Testis (tissue), 5 donors: ENCODE measurements at regions of chr6 and their contacts with region 1.

Region 1: DNA sequence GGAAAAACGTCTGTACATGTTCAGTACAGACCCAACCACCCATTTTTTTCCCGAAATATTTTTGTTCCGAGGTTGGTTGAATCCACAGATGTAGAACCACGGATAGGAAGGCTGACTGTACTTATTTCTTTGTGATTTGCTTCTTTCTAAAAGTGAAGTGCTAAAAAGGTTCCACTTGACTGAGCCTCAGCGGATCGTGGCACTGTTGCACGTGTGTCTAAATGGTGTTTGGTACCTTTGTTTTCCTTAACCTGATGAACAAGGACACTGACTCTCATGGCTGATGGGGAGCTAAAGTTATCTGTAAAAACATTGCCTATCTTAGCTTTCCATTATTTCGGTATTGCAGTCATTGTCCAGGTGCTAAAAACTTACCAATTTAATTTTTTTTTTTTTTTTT is 6.2 kb downstream of the BPHL start:
- DNase-seq: no peak
- H3K4me3 ChIP-seq: no peak overlapping the region
- H3K27ac ChIP-seq: no peak overlapping the region
- H3K4me1 ChIP-seq: no peaks in the 10 kb centered on the region
- H3K27me3 ChIP-seq: no peaks in the 10 kb centered on the region
- CTCF ChIP-seq: no peak
- POLR2A ChIP-seq: no peak

Region 2: DNA sequence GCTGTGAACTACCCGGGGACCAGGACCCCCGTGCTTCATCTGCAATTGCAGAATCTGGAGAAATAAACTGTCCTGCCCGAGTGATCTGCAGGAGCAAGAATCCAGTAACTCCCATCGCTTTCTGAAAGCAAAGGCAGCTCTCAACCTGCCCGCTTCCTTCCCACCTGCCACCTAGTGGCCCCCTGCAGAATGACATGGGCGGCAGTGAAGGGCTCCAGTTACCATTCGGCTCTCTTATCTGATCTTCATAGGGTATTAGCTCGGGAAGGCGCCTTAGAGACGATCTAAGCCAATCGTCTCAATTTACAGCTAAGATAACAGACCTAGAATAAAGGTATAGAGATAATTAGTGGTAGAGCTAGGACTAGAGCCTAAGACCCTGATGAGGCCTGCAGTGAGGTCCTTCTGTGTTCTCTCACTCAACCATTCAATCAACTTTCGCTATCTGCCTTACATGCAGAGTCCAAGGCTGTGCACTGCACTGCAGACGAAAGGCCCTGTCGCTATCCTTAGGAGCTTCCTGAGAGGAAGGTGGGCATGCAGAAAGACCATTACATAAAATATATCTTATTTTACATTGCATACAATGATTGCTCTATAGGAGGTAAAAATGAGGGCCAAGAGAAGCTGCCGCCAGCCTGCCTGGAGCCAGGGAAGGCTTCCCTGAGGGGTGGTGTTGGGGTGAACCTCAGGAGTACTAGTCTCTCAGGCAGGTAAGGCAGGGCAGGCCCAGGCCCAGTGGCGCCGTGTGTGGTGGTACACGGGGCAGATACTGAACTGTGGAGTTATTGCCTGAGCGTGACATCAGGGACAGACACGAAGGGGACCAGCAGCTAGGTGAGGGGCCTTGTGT is 127.0 kb after region 1 on chr6:
- intact Hi-C with region 1: loop called (anchors 5 kb)
- DNase-seq: peak; percentile 78
- H3K4me3 ChIP-seq: no peak overlapping the region
- H3K27ac ChIP-seq: no peak overlapping the region
- H3K4me1 ChIP-seq: peaks cover 5% of the 10 kb centered on the region
- H3K27me3 ChIP-seq: no peaks in the 10 kb centered on the region
- CTCF ChIP-seq: peak; percentile 88 to 96 (median 91)
- POLR2A ChIP-seq: no peak

Region 3: DNA sequence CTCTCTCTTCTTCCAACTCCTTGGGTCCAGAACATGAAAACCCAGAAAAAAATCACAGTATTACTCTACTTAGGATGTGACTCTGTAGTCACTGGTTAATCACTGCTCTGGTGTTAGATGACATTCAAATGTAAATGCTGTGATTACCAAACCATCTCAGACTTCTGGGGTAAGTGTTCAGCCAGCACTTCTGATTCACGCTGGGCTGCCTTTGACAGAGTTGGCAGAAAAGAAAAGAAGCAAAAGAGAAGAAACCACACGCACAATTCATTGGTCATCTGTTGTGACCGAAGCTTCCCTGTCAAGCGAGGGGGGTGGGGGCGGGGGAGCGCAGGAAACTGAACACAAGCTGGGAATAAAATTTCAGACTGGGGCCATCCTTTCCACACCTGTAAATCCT is 216.8 kb after region 1 on chr6:
- intact Hi-C with region 1: no loop called
- DNase-seq: no peak
- H3K4me3 ChIP-seq: no peak overlapping the region
- H3K27ac ChIP-seq: no peak overlapping the region
- H3K4me1 ChIP-seq: no peaks in the 10 kb centered on the region
- H3K27me3 ChIP-seq: no peaks in the 10 kb centered on the region
- CTCF ChIP-seq: no peak
- POLR2A ChIP-seq: no peak